OCI-LY7 (cell line): ENCODE measurements at regions of chr15 and their contacts with region 1.

Region 1: DNA sequence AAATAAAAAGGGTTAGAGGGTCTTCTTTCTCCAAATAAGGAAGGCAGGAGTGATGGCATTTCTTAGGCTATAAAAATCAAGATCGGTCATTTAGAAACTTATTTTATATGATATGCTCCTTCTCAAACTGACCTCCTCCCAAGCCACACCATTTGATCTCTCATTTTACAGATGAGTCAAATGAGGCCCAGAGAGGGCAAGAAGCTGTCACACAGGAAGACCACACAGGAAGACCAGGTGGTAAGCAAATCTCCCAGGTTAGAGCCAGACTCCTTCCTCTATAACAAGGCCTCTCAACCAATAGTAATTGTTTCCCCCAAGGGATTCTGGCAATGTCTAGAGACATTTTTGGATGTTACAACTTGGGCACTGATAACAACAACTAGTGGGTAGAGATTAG is 13.8 kb downstream of the TLE3 start:
- DNase-seq: peak; percentile 67
- H3K4me3 ChIP-seq: peak overlapping the region; percentile 45
- H3K27ac ChIP-seq: peak overlapping the region; percentile 48
- H3K4me1 ChIP-seq: peaks cover 50% of the 10 kb centered on the region
- CTCF ChIP-seq: no peak

Region 2: GRCh38 chr15:70036585-70037291 is 47.2 kb before region 1 on chr15:
- CTCF ChIA-PET with region 1: no interaction called
- POLR2A ChIA-PET with region 1: no interaction called
- intact Hi-C with region 1: loop called (anchors 5 kb)
- DNase-seq: peak; percentile 76
- H3K4me3 ChIP-seq: peak overlapping the region; percentile 14
- H3K27ac ChIP-seq: peak overlapping the region; percentile 15
- H3K4me1 ChIP-seq: peaks cover 50% of the 10 kb centered on the region
- CTCF ChIP-seq: no peak

Region 3: GRCh38 chr15:70376929-70377691 is 293.2 kb after region 1 on chr15:
- CTCF ChIA-PET with region 1: no interaction called
- POLR2A ChIA-PET with region 1: no interaction called
- intact Hi-C with region 1: no loop called
- DNase-seq: no peak
- H3K4me3 ChIP-seq: no peak overlapping the region
- H3K27ac ChIP-seq: no peak overlapping the region
- H3K4me1 ChIP-seq: no peaks in the 10 kb centered on the region
- CTCF ChIP-seq: no peak